ENCODE measurements at regions of chr2 and their contacts with region 1.

Region 1: GRCh38 chr2:118221666-118222594 is 133.7 kb downstream of the INSIG2 start:
- DNase-seq: peak; percentile 76
- ATAC-seq: peak; percentile 96
- H3K4me3 ChIP-seq: no peak overlapping the region
- H3K27ac ChIP-seq: no peak overlapping the region
- H3K4me1 ChIP-seq: no peaks in the 10 kb centered on the region
- H3K27me3 ChIP-seq: peaks cover 43% of the 10 kb centered on the region
- CTCF ChIP-seq: peak; percentile 82
- POLR2A ChIP-seq: no peak
- RAD21 ChIP-seq: peak; percentile 77

Region 2: DNA sequence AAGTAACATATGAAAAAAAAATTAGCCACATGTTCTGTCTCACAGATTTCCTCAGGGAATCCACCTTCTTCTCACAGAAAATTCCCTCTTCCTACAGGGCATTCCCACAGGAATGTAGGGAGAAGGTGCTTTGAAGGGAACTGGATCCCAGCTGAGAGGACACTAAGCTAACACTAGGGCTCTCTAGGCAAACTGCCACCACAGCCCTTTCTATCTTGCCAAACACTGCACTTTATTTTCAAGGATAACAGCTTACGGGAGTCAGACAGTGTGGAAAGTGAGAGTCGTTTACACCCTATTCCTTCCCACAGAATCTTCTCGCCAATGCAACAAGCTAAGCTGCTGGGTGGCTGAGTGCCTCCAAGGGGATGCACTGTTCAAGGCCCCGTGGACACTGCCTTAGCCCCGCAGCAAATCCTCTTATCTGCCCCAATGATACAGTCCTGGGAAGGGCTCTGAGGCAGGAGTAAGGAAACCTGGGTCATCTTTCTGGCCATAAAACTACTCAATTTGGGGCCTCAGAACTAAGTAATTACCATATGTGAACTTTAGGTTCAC is 285.0 kb before region 1 on chr2:
- CTCF ChIA-PET with region 1: no interaction called
- POLR2A ChIA-PET with region 1: no interaction called
- dilution Hi-C with region 1: no loop called
- in situ Hi-C with region 1: no loop called
- intact Hi-C with region 1: no loop called
- DNase-seq: no peak
- ATAC-seq: no peak
- H3K4me3 ChIP-seq: no peak overlapping the region
- H3K27ac ChIP-seq: no peak overlapping the region
- H3K4me1 ChIP-seq: peaks cover 5% of the 10 kb centered on the region; the same call in 1 of the 2 replicates
- H3K27me3 ChIP-seq: no peaks in the 10 kb centered on the region
- CTCF ChIP-seq: no peak
- POLR2A ChIP-seq: no peak
- RAD21 ChIP-seq: no peak

Region 3: GRCh38 chr2:117985092-117985491 is 236.8 kb before region 1 on chr2:
- CTCF ChIA-PET with region 1: no interaction called
- POLR2A ChIA-PET with region 1: no interaction called
- dilution Hi-C with region 1: no loop called
- in situ Hi-C with region 1: no loop called
- intact Hi-C with region 1: no loop called
- DNase-seq: no peak
- ATAC-seq: no peak
- H3K4me3 ChIP-seq: no peak overlapping the region
- H3K27ac ChIP-seq: no peak overlapping the region
- H3K4me1 ChIP-seq: peaks cover 6% of the 10 kb centered on the region
- H3K27me3 ChIP-seq: no peaks in the 10 kb centered on the region
- CTCF ChIP-seq: no peak
- POLR2A ChIP-seq: no peak
- RAD21 ChIP-seq: no peak

Region 4: DNA sequence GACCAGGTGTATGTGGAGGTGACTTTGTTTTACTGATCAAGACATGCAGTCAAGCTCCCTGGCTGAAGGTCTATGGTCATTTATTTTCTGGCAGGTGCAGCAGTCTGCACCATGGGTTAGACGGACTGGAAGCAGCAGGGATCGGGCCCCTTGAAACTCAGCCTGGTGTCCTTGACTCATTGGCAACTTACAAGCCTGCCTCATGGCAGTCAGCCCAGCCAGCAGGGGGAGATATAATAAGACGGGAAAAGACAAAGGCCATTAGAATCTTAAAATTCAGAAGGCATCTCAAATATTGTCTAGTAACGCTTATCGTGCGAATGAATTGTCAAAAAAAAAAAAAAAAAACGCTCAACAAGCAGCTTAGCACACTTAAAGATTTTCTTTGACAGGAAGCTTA is 317.4 kb after region 1 on chr2:
- CTCF ChIA-PET with region 1: no interaction called
- POLR2A ChIA-PET with region 1: no interaction called
- dilution Hi-C with region 1: no loop called
- in situ Hi-C with region 1: no loop called
- intact Hi-C with region 1: loop called (anchors 2 kb)
- DNase-seq: peak; percentile 34
- ATAC-seq: peak; percentile 48; the same call in 1 of the 2 replicates
- H3K4me3 ChIP-seq: no peak overlapping the region
- H3K27ac ChIP-seq: no peak overlapping the region
- H3K4me1 ChIP-seq: no peaks in the 10 kb centered on the region
- H3K27me3 ChIP-seq: no peaks in the 10 kb centered on the region
- CTCF ChIP-seq: peak; percentile 48
- POLR2A ChIP-seq: no peak
- RAD21 ChIP-seq: peak; percentile 44